ENCODE measurements at regions of chr6 and their contacts with region 1.

Region 1: GRCh38 chr6:24581084-24581669 is 64.8 kb downstream of the KIAA0319 start:
- DNase-seq: peak; percentile 91
- H3K4me3 Mint-ChIP-seq: no peak overlapping the region
- H3K27ac Mint-ChIP-seq: no peak overlapping the region
- H3K4me1 Mint-ChIP-seq: peaks cover 2% of the 10 kb centered on the region
- H3K27me3 Mint-ChIP-seq: peaks cover 3% of the 10 kb centered on the region

Region 2: GRCh38 chr6:22873513-22874136 is 1707.6 kb before region 1 on chr6:
- CTCF ChIA-PET with region 1: no interaction called
- intact Hi-C with region 1: no loop called
- DNase-seq: no peak
- H3K4me3 Mint-ChIP-seq: no peak overlapping the region
- H3K27ac Mint-ChIP-seq: no peak overlapping the region
- H3K4me1 Mint-ChIP-seq: no peaks in the 10 kb centered on the region
- H3K27me3 Mint-ChIP-seq: no peaks in the 10 kb centered on the region

Region 3: GRCh38 chr6:23940466-23940865 is 640.7 kb before region 1 on chr6:
- CTCF ChIA-PET with region 1: no interaction called
- intact Hi-C with region 1: no loop called
- DNase-seq: no peak
- H3K4me3 Mint-ChIP-seq: no peak overlapping the region
- H3K27ac Mint-ChIP-seq: no peak overlapping the region
- H3K4me1 Mint-ChIP-seq: no peaks in the 10 kb centered on the region
- H3K27me3 Mint-ChIP-seq: peaks cover 3% of the 10 kb centered on the region

Region 4: DNA sequence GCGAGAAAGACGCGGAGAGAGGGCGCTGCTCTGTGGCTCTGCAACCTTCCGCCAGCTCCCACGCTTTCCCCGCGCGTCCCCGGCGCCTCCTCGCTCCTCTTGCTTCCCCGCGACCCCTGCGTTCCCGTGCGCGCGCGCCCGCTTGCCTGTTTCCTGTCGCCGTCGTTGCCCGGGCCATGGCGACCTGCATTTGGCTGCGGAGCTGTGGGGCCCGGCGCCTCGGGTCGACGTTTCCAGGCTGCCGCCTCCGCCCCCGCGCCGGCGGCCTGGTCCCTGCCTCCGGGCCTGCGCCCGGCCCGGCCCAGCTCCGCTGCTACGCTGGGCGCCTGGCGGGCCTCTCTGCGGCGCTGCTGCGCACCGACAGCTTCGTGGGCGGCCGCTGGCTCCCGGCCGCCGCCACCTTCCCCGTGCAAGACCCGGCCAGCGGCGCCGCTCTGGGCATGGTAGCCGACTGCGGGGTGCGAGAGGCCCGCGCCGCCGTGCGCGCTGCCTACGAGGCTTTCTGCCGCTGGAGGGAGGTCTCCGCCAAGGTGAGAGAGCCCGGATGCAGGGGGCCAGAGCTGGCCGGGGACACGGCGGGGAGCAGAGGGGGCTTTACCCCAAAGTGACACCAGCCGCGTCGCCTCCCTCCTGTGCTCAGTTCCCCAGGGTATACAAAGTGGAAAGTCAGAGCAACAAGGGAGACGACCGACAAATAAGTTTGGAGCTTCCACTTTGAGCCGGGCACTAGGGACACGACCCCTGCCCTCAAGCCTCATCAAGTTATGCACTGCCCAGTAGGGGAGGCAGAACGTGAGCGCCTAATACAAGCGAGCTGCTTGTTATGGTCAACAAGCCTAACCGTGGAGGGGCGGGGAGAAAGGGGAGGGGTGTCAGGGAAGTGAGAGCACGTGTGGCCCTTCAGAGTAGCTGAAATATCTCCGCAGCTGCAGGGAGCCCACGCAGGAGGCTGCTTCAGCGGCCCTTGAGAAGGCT is 86.1 kb before region 1 on chr6 and contains the start of gene ALDH5A1:
- CTCF ChIA-PET with region 1: interaction called, 11 read pairs
- intact Hi-C with region 1: no loop called
- DNase-seq: peak; percentile 87
- H3K4me3 Mint-ChIP-seq: peak within 1 kb of the TSS; percentile 79
- H3K27ac Mint-ChIP-seq: peak within 1 kb of the TSS; percentile 19
- H3K4me1 Mint-ChIP-seq: peaks cover 14% of the 10 kb centered on the region
- H3K27me3 Mint-ChIP-seq: no peaks in the 10 kb centered on the region
- total RNA-seq, gene ALDH5A1: 15.8 to 16.8 TPM

Region 5: DNA sequence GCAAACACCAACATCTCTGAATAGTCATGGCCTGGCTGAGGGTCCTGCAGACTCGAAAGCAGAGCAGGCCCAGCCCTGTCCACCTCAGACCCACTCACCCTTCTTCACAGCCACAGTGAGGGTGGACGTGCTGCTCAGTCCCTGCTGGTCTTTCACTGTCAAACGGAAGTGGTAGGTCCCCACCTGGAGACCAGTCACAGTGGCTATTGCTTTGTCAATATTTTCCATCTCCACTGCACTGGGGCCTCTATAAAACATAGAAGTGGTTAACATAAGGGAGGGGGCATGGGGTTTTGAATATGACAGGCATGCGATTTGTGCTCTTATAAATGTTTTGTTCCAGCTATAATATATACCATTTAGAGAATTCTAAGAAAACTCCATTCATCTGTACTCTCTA is 12.5 kb before region 1 on chr6:
- CTCF ChIA-PET with region 1: interaction called, 11 read pairs
- intact Hi-C with region 1: no loop called
- DNase-seq: no peak
- H3K4me3 Mint-ChIP-seq: no peak overlapping the region
- H3K27ac Mint-ChIP-seq: no peak overlapping the region
- H3K4me1 Mint-ChIP-seq: no peaks in the 10 kb centered on the region
- H3K27me3 Mint-ChIP-seq: no peaks in the 10 kb centered on the region

Region 6: DNA sequence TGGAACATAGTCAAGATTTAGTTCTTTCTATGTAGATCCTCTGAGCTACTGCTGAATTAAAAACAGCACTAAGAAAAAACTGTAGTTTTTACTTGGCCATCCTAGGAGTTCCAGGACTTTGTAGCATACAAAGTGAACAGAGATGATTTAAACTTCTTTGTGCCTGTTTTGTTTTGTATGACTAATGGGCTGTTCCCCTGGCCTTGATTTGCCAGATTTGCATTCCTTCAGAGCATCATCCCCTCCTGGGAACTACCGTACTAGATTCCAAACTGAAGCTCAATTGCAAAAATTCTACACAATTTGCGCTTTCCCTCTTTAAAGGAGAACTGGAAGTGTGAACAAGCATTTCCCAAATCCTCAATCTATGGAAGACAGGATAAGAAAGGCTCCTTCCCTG is 108.8 kb after region 1 on chr6:
- CTCF ChIA-PET with region 1: interaction called, 100 read pairs
- intact Hi-C with region 1: loop called (anchors 1 kb)
- DNase-seq: no peak
- H3K4me3 Mint-ChIP-seq: no peak overlapping the region
- H3K27ac Mint-ChIP-seq: no peak overlapping the region
- H3K4me1 Mint-ChIP-seq: peaks cover 22% of the 10 kb centered on the region
- H3K27me3 Mint-ChIP-seq: no peaks in the 10 kb centered on the region

Region 7: DNA sequence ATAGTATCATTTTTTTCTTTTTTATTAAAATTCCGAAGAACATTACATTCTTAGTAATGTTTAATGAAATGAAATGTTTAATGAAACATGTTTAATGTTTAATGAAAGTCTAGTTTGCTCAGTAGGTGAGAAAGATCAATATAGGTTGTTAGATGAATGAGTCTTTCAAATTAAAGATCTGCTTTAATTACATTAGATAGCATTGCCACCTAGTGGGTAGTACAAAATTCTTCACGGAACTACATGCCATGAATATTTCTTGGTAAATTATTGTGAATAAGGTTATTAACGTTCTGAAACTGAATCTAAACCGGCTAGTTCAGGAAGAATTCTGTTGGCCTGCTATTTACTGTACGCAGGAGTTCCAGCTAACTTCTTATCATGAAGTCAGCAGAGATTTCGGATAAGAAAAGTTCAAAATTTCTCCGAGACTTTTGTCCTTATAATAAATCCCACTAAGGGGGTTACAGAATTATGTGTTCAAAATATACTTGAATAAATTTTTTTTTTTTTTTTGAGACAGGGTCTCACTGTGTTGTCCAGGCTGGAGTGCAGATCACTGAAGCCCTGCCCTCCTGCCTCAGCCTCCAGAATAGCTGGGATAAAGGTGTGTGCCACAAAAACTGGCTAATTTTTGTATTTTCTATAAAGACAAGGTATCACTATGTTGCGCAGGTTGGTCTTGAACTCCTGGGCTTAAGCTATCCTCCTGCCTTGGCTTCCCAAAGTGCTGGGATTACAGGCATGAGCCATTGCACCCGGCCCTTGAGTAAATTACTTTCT is 185.7 kb after region 1 on chr6:
- CTCF ChIA-PET with region 1: interaction called, 59 read pairs
- intact Hi-C with region 1: loop called (anchors 1 kb)
- DNase-seq: no peak
- H3K4me3 Mint-ChIP-seq: no peak overlapping the region
- H3K27ac Mint-ChIP-seq: no peak overlapping the region
- H3K4me1 Mint-ChIP-seq: peaks cover 3% of the 10 kb centered on the region
- H3K27me3 Mint-ChIP-seq: no peaks in the 10 kb centered on the region

Region 8: DNA sequence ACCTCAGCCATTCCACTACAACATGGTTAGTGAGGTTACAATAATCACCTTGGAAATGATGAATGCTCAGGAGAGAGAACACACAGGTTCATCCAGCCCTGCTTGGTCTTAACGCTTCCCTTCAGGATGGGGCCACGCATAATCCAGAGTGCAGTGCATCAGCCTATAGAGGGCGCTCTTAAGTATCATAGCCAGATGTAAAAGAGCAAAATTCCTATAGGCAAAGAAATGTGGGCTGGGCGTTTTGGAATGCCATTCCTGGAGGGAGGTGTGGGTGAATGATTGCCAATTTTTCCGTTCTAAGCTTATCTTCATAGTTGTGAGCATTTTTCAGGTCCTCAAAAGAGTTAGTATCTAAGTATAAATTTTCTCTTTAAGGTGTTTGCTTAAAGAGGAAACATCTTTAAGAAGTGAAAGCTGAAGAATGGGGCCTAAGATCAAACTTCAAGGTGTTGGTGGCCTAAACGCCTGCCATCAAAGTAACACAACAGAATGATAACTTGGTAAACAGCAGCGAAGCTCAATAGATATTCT is 352.8 kb after region 1 on chr6:
- CTCF ChIA-PET with region 1: no interaction called
- intact Hi-C with region 1: no loop called
- DNase-seq: peak; percentile 67
- H3K4me3 Mint-ChIP-seq: peak overlapping the region; percentile 96
- H3K27ac Mint-ChIP-seq: peak overlapping the region; percentile 96
- H3K4me1 Mint-ChIP-seq: peaks cover 73% of the 10 kb centered on the region
- H3K27me3 Mint-ChIP-seq: no peaks in the 10 kb centered on the region

Region 9: DNA sequence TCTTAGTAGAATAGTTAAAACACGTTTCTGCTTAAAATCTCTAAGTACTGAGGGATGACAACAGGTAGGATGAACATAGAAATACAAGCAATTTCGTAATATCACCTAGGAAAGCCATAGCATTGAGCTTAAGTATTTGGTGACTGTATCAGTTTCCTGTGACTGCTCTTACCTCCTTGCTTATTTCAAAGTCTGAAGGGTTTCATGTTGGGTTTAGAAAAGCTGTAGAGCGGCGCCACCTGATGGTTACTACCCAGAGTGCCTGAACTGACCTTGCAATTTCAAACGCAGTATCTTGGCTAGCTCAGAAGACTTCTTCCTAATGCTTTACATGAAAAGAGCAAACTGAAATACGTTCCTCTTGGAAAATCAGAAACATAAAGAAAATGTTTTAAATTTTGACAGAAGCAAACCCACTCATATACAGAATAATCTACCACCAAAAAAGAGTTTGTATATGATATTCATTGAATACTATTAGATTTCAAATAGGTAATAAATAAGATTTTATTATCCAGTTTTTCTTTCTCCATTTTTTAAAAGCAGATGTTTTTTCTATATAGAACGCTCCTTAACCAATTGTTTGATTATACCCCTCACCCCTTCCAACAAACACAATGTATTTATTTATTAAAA is 436.9 kb after region 1 on chr6:
- CTCF ChIA-PET with region 1: interaction called, 18 read pairs
- intact Hi-C with region 1: loop called (anchors 1 kb)
- DNase-seq: peak; percentile 93
- H3K4me3 Mint-ChIP-seq: peak overlapping the region; percentile 6
- H3K27ac Mint-ChIP-seq: peak overlapping the region; percentile 84
- H3K4me1 Mint-ChIP-seq: peaks cover 55% of the 10 kb centered on the region
- H3K27me3 Mint-ChIP-seq: no peaks in the 10 kb centered on the region

Region 10: DNA sequence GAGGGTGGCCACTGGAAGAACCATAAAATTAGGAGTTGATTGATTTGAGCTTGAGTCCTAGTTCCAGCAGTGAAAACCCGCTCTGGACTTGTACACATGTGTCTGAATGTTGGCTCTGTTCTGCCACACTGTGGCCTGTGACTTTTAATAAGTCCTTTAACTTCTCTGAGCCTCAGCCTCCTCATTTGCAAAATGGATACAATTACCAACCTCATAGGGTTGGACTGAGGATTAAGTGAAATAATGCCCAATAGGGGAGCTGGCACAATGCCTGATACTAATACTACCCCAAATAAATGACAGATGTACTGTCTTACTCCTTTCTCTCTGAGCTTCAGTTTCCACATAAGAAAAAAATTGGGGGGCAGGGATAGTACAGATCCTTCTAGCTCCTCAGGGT is 447.2 kb after region 1 on chr6:
- CTCF ChIA-PET with region 1: no interaction called
- intact Hi-C with region 1: no loop called
- DNase-seq: no peak
- H3K4me3 Mint-ChIP-seq: no peak overlapping the region
- H3K27ac Mint-ChIP-seq: peak overlapping the region; percentile 78
- H3K4me1 Mint-ChIP-seq: peaks cover 50% of the 10 kb centered on the region
- H3K27me3 Mint-ChIP-seq: no peaks in the 10 kb centered on the region

Measured in activated naive CD4-positive, alpha-beta T cell treated with anti-CD3 and anti-CD28 coated beads for 36 hours (primary cell).